B cell (primary cell): ENCODE measurements at regions of chr12 and their contacts with region 1.

Region 1: DNA sequence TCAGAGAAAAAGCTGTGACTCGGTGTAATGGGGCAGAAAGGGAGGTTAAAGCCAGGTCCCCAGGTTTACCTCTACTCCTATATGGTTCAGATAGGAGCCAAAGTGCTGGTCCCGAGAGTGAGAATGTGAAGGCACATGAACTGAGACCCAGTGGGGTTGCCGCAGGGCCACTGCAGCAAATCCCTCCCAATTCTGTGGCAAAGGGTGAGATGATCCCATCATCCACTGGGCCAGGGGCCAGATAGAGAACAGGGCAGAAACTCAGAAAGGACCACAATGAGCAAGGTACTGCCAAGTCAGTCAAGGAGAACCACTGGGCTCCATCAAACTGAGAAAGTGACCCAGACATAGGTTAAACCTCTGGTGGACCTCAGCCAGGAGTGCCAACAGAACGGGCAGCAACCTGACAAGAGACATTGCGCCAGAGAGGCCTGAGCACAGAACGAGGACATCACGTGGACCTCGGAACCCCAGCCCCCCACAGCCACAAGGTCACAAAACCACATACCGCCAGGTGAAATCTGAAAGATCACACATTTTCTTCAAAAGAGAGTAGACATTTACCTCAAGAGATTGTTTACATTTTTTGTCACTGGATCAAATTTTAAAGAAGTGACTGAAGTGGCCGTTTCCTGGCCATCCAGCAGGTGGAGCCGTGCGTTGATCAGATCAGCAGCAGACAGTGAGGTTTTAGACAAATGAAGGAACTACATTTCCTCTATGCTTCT is 20.5 kb upstream of the ITPR2 start:
- DNase-seq: peak; percentile 79
- ATAC-seq: peak; percentile 92
- H3K4me3 ChIP-seq: no peak overlapping the region
- H3K4me3 Mint-ChIP-seq: no peak overlapping the region
- H3K27ac ChIP-seq: no peak overlapping the region
- H3K27ac Mint-ChIP-seq: peak overlapping the region; percentile 13
- H3K4me1 ChIP-seq: peaks cover 3 to 8% of the 10 kb centered on the region in 2 donors
- H3K4me1 Mint-ChIP-seq: no peaks in the 10 kb centered on the region
- H3K27me3 ChIP-seq: no peaks in the 10 kb centered on the region
- H3K27me3 Mint-ChIP-seq: no peaks in the 10 kb centered on the region
- CTCF ChIP-seq: peak; percentile 94

Region 2: GRCh38 chr12:26884765-26885576 is 31.5 kb after region 1 on chr12:
- CTCF ChIA-PET with region 1: interaction called, 49 read pairs
- POLR2A ChIA-PET with region 1: no interaction called
- intact Hi-C with region 1: loop called (anchors 1 kb)
- DNase-seq: peak; percentile 89
- ATAC-seq: peak; percentile 96
- H3K4me3 ChIP-seq: peak overlapping the region in 2 of 5 experiments; percentile 3 to 26
- H3K4me3 Mint-ChIP-seq: peak overlapping the region; percentile 67
- H3K27ac ChIP-seq: no peak overlapping the region
- H3K27ac Mint-ChIP-seq: no peak overlapping the region
- H3K4me1 ChIP-seq: peaks cover 4 to 8% of the 10 kb centered on the region in 2 donors
- H3K4me1 Mint-ChIP-seq: peaks cover 9% of the 10 kb centered on the region
- H3K27me3 ChIP-seq: no peaks in the 10 kb centered on the region
- H3K27me3 Mint-ChIP-seq: no peaks in the 10 kb centered on the region
- CTCF ChIP-seq: peak; percentile 97

Region 3: DNA sequence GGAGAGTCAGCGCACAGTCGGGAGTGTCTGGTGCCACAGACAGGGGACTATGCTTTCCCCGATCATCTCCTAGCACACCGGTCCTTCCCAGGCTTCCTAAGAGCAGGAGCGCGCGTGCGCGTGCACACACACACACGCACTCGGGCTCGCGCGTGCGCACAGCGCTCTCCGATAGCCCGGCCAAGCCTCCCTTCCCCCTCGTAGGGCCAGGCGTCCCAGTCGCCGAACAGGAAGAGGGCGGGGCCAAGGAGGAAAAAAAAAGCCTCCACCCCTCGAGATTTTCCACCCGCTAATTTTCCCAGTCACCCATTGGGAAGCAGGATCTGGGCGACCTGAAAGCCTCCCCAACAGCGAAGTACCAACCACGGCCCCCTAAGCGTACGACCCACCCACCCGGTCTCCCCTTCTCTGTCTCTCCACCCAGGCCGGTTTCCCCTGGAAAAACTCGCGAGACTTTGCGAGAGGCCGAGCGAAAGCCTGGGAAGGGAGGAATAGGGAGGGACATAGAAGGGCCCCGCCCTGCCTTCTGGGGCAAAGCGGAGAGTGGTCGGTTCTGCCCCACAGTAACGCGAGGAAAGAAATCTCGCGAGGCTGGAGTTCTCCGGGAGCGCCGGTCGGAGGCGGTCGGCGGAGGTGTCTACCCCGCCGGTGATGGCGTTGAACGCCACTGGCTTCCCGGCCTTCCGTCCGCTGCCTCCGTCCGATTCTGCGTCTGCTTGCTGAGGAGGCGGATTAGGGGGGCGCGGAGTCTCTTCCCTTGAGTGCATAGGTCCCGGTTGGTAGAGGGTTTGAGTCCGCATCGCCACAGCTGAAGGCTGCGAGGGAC is 84.6 kb after region 1 on chr12 and contains the starts of genes FGFR1OP2 and INTS13:
- CTCF ChIA-PET with region 1: no interaction called
- POLR2A ChIA-PET with region 1: no interaction called
- intact Hi-C with region 1: loop called (anchors 2 kb)
- DNase-seq: peak; percentile 97
- ATAC-seq: peak; percentile 91
- H3K4me3 ChIP-seq: peak within 1 kb of the TSS; percentile 72 to 100 (median 98)
- H3K4me3 Mint-ChIP-seq: peak within 1 kb of the TSS; percentile 99
- H3K27ac ChIP-seq: peak within 1 kb of the TSS; percentile 88 to 96
- H3K27ac Mint-ChIP-seq: peak within 1 kb of the TSS; percentile 99
- H3K4me1 ChIP-seq: peaks cover 18 to 57% of the 10 kb centered on the region in 2 donors
- H3K4me1 Mint-ChIP-seq: peaks cover 64% of the 10 kb centered on the region
- H3K27me3 ChIP-seq: no peaks in the 10 kb centered on the region
- H3K27me3 Mint-ChIP-seq: no peaks in the 10 kb centered on the region
- CTCF ChIP-seq: no peak
- total RNA-seq, gene FGFR1OP2: 64.3 and 67.3 TPM in 2 replicates
- total RNA-seq, gene INTS13: 15.6 and 16.2 TPM in 2 replicates

Region 4: DNA sequence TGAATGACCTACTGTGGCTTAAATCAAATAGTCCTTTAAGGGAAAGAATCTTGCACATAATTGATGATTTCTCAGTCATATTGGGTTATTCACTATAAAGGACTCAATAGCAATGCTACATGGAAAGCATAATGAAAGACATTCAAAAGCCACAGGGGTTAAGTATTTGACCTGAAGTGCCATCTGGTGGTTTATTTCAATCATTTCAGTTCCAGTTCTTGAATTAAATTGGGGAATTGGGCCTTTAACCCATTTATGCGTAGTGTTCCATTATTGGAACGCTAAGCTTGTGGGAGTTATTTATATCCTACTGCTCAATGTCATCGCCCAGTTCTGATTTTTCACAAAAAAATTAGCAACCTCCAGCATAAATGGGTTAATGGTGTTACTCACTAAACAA is 270.2 kb after region 1 on chr12:
- CTCF ChIA-PET with region 1: no interaction called
- POLR2A ChIA-PET with region 1: no interaction called
- intact Hi-C with region 1: loop called (anchors 5 kb)
- DNase-seq: peak; percentile 48
- ATAC-seq: no peak
- H3K4me3 ChIP-seq: no peak overlapping the region
- H3K4me3 Mint-ChIP-seq: no peak overlapping the region
- H3K27ac ChIP-seq: no peak overlapping the region
- H3K27ac Mint-ChIP-seq: no peak overlapping the region
- H3K4me1 ChIP-seq: no peaks in the 10 kb centered on the region
- H3K4me1 Mint-ChIP-seq: no peaks in the 10 kb centered on the region
- H3K27me3 ChIP-seq: no peaks in the 10 kb centered on the region
- H3K27me3 Mint-ChIP-seq: no peaks in the 10 kb centered on the region
- CTCF ChIP-seq: peak; percentile 58

Region 5: DNA sequence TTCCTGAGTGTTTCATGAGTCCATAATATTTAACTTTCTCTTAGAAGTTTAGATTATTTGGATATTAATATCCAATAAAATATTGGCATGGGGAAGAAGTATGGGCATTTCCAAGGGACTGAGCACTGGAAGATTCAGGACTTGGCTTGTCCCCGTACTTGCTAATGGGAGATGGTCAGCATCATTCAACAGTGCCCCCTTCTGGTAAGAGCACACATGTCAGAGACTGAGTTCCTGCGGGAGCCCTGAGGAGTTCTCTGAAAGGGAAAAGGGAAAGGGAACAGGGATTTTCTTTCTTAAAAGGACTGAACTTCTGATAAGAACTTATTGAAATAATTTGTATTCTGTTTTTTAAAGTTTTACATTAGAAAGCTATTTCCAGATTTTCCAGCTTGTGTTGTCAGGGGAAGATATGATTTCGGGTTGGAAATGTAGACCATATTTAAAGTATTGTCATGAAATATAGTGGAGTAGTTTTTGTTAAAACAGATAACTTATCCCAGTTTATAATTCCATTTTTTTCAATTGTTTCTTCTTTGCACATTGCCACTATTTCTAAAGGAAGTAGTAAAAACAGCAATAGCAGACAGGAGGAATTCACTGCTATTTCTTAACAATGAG is 288.7 kb after region 1 on chr12:
- CTCF ChIA-PET with region 1: no interaction called
- POLR2A ChIA-PET with region 1: no interaction called
- intact Hi-C with region 1: loop called (anchors 1 kb)
- DNase-seq: peak; percentile 66
- ATAC-seq: peak; percentile 63
- H3K4me3 ChIP-seq: no peak overlapping the region
- H3K4me3 Mint-ChIP-seq: no peak overlapping the region
- H3K27ac ChIP-seq: no peak overlapping the region
- H3K27ac Mint-ChIP-seq: no peak overlapping the region
- H3K4me1 ChIP-seq: no peaks in the 10 kb centered on the region
- H3K4me1 Mint-ChIP-seq: peaks cover 8% of the 10 kb centered on the region
- H3K27me3 ChIP-seq: no peaks in the 10 kb centered on the region
- H3K27me3 Mint-ChIP-seq: no peaks in the 10 kb centered on the region
- CTCF ChIP-seq: peak; percentile 83